Dendritic cell treated with granulocyte-macrophage colony-stimulating factor and Interleukin-4, amounts not matched to agents 40 ng/mL and 50 ng/mL, for 4 days (primary cell): ENCODE measurements at regions of chr3 and their contacts with region 1.

Region 1: GRCh38 chr3:179591313-179591712 is 13.1 kb downstream of the MRPL47 start:
- H3K4me3 Mint-ChIP-seq: no peak overlapping the region
- H3K27ac Mint-ChIP-seq: no peak overlapping the region
- H3K4me1 Mint-ChIP-seq: no peaks in the 10 kb centered on the region
- H3K27me3 Mint-ChIP-seq: no peaks in the 10 kb centered on the region

Region 2: DNA sequence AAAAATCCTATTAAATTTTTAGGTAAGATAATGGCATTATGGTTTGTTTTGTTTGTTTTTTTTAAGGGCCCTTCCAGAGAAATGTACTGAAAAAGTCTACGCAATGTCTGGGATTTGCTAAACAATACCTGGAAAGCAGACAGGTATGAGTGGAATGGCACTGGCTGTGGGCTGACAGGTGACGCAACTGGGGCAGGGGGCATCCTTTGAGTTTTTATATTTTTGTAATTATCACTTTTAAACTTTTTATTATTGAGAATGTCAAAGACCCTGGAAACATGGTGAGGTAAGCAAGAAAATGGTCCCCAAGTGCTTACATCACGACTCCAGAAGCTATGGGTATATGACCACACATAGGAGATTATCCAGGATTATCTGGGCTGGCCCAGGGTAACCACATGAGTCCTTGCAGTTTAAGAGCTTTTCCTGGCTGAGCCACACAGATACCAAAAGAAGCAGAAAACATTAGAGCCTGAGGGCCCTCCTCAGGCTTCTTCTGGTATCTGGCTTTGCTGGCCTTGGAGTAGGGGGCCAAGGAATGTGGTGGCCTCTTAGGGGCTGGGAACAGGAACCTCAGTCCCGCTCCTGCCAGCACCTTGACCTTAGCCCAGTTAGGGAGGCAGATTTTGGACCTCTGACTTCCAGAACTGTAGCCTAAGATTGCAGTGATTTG is 796.1 kb before region 1 on chr3:
- intact Hi-C with region 1: no loop called
- H3K4me3 Mint-ChIP-seq: no peak overlapping the region
- H3K27ac Mint-ChIP-seq: no peak overlapping the region
- H3K4me1 Mint-ChIP-seq: no peaks in the 10 kb centered on the region
- H3K27me3 Mint-ChIP-seq: no peaks in the 10 kb centered on the region

Region 3: GRCh38 chr3:179743913-179744312 is 152.6 kb after region 1 on chr3:
- intact Hi-C with region 1: no loop called
- H3K4me3 Mint-ChIP-seq: no peak overlapping the region
- H3K27ac Mint-ChIP-seq: no peak overlapping the region
- H3K4me1 Mint-ChIP-seq: no peaks in the 10 kb centered on the region
- H3K27me3 Mint-ChIP-seq: no peaks in the 10 kb centered on the region

Region 4: GRCh38 chr3:180973543-180973942 is 1382.2 kb after region 1 on chr3:
- intact Hi-C with region 1: loop called (anchors 10 kb)
- H3K4me3 Mint-ChIP-seq: no peak overlapping the region
- H3K27ac Mint-ChIP-seq: no peak overlapping the region
- H3K4me1 Mint-ChIP-seq: peaks cover 5% of the 10 kb centered on the region
- H3K27me3 Mint-ChIP-seq: no peaks in the 10 kb centered on the region